Left cardiac atrium (tissue), 4 donors: ENCODE measurements at regions of chr17 and their contacts with region 1.

Region 1: DNA sequence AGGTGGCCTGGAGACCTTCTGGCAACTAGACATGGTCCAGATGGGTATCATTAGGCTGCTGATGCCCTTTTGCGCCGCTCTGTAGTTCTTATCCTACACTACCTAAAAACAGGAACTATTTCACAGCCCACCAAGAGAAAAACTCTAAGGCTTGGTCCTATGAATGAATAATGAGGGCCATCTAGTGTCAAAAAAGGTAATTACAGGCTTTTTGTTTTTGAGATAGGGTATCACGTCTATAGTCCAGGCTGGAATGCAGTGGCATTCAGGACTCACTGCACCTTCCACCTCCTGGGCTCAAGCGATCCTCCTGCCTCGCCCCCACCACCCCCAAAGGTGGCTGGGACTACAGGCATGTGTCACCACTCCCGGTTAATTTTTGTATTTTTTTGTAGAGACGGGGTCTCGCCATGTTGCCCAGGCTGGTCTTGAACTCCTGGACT is 20.9 kb downstream of the COIL start:
- DNase-seq: no peak
- ATAC-seq: peak in 1 of 2 donors; percentile 77

Region 2: GRCh38 chr17:56819431-56820145 is 120.3 kb before region 1 on chr17:
- intact Hi-C with region 1: loop called (anchors 1 to 5 kb)
- DNase-seq: peak; percentile 49
- ATAC-seq: peak; percentile 81

Region 3: GRCh38 chr17:56891784-56892183 is 48.1 kb before region 1 on chr17:
- intact Hi-C with region 1: loop called in 1 of 2 experiments (anchors 5 kb)
- DNase-seq: peak; percentile 41
- ATAC-seq: peak in 1 of 2 donors; percentile 33